PC-3 (cell line): ENCODE measurements at regions of chr11 and their contacts with region 1.

Region 1: DNA sequence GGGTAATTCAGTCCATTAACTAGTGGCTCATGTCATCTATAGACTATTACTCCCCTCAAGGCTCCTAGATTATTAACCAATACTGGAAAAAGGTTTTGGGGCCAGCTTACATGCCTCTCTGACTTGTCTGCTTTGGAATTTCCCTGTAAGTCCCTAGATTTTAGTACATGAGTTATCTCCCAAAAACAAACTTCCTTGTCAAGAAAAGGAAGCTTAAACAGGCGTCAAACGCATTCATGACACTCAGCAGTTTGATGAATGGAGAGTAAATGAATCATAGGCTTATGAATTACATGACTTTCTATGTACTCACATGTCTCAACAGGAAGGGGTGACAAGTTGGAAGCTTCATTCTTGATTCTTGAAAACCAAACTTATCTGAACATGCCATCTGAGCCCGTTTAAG is 70.8 kb downstream of the BLID start:
- DNase-seq: peak; percentile 92
- ATAC-seq: peak; percentile 76
- H3K4me3 ChIP-seq: no peak overlapping the region
- H3K27ac ChIP-seq: peak overlapping the region; percentile 80
- H3K4me1 ChIP-seq: peaks cover 41% of the 10 kb centered on the region
- H3K27me3 ChIP-seq: no peaks in the 10 kb centered on the region
- CTCF ChIP-seq: no peak

Region 2: GRCh38 chr11:122074022-122074421 is 28.8 kb after region 1 on chr11:
- CTCF ChIA-PET with region 1: no interaction called
- POLR2A ChIA-PET with region 1: interaction called, 29 read pairs
- intact Hi-C with region 1: no loop called
- DNase-seq: no peak
- ATAC-seq: no peak
- H3K4me3 ChIP-seq: no peak overlapping the region
- H3K27ac ChIP-seq: no peak overlapping the region
- H3K4me1 ChIP-seq: no peaks in the 10 kb centered on the region
- H3K27me3 ChIP-seq: peaks cover 2% of the 10 kb centered on the region; the same call in 1 of the 2 replicates
- CTCF ChIP-seq: no peak

Region 3: DNA sequence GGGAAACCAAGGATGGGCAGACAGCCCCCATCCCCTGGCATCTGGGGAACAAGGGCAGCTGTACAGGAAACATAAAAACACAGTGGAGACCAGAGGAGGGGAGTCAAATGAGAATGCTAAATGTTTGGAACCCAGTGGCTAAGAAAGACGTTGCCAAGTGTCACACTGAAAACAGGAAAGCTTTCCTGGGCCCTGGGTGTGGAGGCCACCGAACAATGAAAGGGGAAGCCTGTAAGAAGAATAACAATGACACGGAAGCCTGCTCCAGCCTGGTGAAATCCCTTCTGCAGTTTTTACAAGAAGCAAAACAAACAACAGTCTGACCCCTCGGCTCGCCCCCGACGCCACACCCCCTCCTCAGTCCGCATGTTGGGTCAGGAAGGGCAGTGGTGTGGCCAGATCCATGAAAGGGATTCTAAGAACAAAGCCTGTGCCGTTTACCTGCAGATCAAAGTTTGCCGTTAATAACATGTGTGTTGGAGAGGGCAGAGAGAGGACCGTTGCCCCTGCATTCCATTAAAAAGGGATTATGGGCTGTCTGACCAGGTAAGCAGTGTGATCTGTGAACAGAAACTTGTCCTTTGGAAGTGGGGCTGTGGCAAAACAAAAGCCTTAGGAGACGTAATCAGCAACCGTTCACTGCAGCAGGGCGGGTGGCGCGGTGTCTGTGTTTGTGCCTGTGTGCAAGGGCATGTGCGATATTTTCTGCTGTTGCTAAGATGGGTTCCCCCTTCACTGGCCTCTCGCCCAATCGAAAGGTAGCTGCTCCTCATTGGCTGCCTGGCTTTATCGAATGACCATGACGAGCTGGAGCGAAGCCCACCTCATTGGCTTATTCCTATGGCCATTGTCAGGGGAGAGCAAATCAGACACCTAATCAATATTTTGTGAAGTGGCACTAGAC is 184.5 kb after region 1 on chr11:
- CTCF ChIA-PET with region 1: no interaction called
- POLR2A ChIA-PET with region 1: no interaction called
- intact Hi-C with region 1: no loop called
- DNase-seq: no peak
- ATAC-seq: no peak; the same call in 1 of the 2 replicates
- H3K4me3 ChIP-seq: no peak overlapping the region
- H3K27ac ChIP-seq: no peak overlapping the region
- H3K4me1 ChIP-seq: 0 out of 2 replicates have a peak, but pooled peaks cover 4% of the 10 kb centered on the region
- H3K27me3 ChIP-seq: peaks cover 66% of the 10 kb centered on the region
- CTCF ChIP-seq: no peak

Region 4: GRCh38 chr11:122344274-122344673 is 299.1 kb after region 1 on chr11:
- CTCF ChIA-PET with region 1: no interaction called
- POLR2A ChIA-PET with region 1: interaction called, 21 read pairs
- intact Hi-C with region 1: no loop called
- DNase-seq: peak; percentile 63
- ATAC-seq: no peak
- H3K4me3 ChIP-seq: no peak overlapping the region
- H3K27ac ChIP-seq: no peak overlapping the region
- H3K4me1 ChIP-seq: peaks cover 10% of the 10 kb centered on the region; the same call in 1 of the 2 replicates
- H3K27me3 ChIP-seq: peaks cover 71% of the 10 kb centered on the region
- CTCF ChIP-seq: no peak